A549 (cell line): ENCODE measurements at regions of chr9 and their contacts with region 1.

Region 1: DNA sequence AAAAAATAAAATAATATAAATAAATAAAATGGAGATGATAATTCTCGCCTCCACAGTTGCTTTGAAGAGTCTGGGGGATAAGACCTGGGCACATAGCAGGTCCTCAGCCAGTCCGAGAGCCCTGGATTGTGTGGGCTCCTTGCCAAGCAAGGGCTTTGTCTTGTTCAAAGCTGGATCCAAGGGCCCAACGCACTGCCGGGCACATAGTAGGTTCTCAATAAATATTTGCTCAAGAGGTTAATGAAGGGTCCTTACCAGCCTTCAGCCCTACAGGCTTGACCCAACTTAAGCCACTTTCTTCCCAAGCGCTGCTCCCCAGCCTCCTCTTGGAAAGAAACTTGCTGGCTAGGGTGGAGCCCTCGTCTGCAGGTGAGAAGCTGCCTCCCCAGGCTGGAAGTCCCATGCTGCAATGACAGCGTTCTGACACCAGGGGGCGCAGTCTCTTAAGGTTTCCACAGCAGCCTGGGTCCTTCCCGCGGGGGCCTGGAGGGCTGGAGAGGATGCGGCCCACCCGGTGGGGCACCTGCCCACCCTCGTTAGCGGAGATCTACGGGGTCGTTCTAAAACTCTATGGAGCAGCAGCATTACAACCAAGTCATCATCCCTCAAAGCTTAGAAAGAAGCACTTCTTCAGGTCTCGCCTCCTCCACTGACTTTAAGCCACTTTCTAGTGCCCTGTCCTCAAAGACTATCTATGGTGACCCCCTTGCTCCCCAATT is 115.2 kb downstream of the LHX2 start:
- DNase-seq: peak; percentile 71 to 75
- ATAC-seq: peak; percentile 62 to 82; a peak in 5 of 6 replicates
- H3K4me3 ChIP-seq: no peak overlapping the region
- H3K27ac ChIP-seq: peak overlapping the region in 1 of 2 experiments; percentile 47; a peak in 2 of 6 replicates
- H3K4me1 ChIP-seq: peaks cover 14% of the 10 kb centered on the region; the same call in 2 of the 3 replicates
- CTCF ChIP-seq: peak; percentile 91
- EP300 ChIP-seq: no peak
- POLR2A ChIP-seq: no peak
- RAD21 ChIP-seq: peak; percentile 93 to 95

Region 2: DNA sequence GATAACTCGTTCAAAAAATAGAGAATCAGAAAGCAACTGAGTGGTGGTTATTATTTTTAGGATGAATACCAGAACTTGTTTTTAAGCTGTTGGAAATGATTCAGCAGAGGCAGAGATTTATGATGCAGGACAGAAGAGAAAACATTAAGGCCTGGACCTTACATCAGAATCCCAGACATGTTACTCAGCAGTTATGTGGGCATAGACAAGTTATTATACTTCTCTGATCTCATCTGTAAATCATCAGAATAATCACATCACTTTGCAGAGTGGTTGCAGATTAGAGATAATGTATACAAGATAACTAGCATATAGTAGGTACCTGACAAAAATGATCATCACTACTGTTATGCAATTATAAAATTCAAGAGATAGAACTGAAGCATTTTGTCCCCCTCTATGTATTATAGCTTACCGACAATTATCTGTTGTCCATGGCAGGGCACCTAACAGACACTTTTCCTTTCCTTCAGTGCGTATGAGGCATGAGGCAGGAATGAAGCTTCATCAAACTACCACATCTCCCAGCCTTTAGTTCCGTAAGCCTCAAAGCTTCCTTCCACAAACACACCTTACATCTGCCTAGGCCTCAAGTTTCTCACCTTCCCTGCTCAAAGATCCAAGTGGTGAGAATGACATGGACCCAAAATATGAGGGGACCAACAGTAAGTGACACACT is 362.7 kb before region 1 on chr9:
- CTCF ChIA-PET with region 1: no interaction called
- POLR2A ChIA-PET with region 1: no interaction called
- DNase-seq: peak in 1 of 2 experiments; percentile 5
- ATAC-seq: no peak
- H3K4me3 ChIP-seq: no peak overlapping the region
- H3K27ac ChIP-seq: no peak overlapping the region
- H3K4me1 ChIP-seq: peaks cover 6% of the 10 kb centered on the region; the same call in 2 of the 3 replicates
- CTCF ChIP-seq: no peak
- EP300 ChIP-seq: no peak
- POLR2A ChIP-seq: no peak
- RAD21 ChIP-seq: no peak

Region 3: GRCh38 chr9:124149992-124150391 is 23.3 kb after region 1 on chr9:
- CTCF ChIA-PET with region 1: interaction called, 17 read pairs
- POLR2A ChIA-PET with region 1: no interaction called
- DNase-seq: no peak
- ATAC-seq: peak; percentile 69 to 74; a peak in 5 of 6 replicates
- H3K4me3 ChIP-seq: no peak overlapping the region
- H3K27ac ChIP-seq: no peak overlapping the region
- H3K4me1 ChIP-seq: peaks cover 10% of the 10 kb centered on the region; the same call in 2 of the 3 replicates
- CTCF ChIP-seq: no peak
- EP300 ChIP-seq: no peak
- POLR2A ChIP-seq: no peak
- RAD21 ChIP-seq: no peak

Region 4: DNA sequence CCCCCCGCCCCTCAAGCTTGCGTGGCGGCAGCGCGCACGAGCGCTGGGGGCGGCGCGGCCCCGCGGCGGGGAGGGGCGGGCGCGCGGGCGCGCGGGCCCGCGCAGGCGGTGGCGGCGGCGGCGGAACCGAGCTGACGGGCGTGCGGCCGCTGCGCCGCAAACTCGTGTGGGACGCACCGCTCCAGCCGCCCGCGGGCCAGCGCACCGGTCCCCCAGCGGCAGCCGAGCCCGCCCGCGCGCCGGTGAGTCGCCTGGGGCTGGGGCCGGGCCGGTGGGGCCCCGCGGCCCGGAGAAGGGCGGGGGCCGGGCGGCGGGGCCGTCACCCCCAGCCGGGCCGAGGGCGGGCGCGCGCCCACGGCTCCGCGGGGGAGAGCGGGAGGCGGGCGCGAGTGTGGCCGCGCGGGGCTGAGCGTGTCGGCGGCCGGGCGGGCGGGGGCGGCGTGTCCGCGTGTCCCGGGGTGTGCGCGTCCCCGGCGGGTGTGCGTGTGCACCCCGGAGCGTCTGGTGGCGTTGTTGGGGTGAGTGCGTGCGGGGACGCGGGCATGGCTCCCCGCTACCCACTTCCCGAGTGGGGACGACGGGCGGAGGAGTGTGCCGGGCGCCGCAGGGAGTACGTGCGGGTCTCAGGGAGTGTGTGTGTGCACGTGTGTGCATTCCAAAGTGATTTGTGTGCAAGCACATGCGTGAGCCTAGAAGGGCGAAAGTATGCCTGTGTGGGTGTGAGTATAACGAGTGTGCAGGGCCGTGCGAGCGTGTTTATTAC is 131.3 kb after region 1 on chr9 and contains the start of gene NEK6:
- CTCF ChIA-PET with region 1: interaction called, 11 read pairs
- POLR2A ChIA-PET with region 1: no interaction called
- DNase-seq: no peak
- ATAC-seq: peak; percentile 10 to 27; a peak in 5 of 6 replicates
- H3K4me3 ChIP-seq: peak within 1 kb of the TSS; percentile 79
- H3K27ac ChIP-seq: peak within 1 kb of the TSS; percentile 84 to 100
- H3K4me1 ChIP-seq: peaks cover 48% of the 10 kb centered on the region
- CTCF ChIP-seq: no peak
- EP300 ChIP-seq: no peak
- POLR2A ChIP-seq: peak; percentile 35
- RAD21 ChIP-seq: no peak
- polyA plus RNA-seq, gene NEK6: 33.7 and 38.7 TPM in 2 replicates

Region 5: DNA sequence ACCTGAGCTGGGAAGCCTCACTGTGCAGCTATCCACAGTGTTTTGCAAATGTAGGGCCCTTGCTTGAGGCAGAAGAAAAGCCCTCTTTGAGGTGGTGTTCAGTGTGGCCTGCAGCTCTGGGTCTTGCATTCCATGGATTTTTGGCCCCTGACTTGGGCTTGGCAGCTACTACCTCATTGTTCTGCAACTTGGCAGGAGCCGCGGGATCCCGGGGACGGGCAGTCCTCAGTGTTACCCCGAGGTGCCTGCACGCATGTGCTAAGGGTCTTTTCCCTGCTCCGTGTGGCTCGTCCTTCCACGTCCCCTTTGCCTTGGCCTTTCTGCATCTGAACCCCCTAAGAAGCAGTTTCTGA is 170.8 kb after region 1 on chr9:
- CTCF ChIA-PET with region 1: interaction called, 21 read pairs
- POLR2A ChIA-PET with region 1: no interaction called
- DNase-seq: peak; percentile 70 to 72
- ATAC-seq: peak; percentile 41 to 75; a peak in 5 of 6 replicates
- H3K4me3 ChIP-seq: no peak overlapping the region
- H3K27ac ChIP-seq: peak overlapping the region; percentile 79 to 89
- H3K4me1 ChIP-seq: peaks cover 87% of the 10 kb centered on the region
- CTCF ChIP-seq: no peak
- EP300 ChIP-seq: peak in 1 of 2 experiments; percentile 54; a peak in 1 of 5 replicates
- POLR2A ChIP-seq: no peak
- RAD21 ChIP-seq: peak; percentile 6 to 13; a peak in 1 of 5 replicates

Region 6: DNA sequence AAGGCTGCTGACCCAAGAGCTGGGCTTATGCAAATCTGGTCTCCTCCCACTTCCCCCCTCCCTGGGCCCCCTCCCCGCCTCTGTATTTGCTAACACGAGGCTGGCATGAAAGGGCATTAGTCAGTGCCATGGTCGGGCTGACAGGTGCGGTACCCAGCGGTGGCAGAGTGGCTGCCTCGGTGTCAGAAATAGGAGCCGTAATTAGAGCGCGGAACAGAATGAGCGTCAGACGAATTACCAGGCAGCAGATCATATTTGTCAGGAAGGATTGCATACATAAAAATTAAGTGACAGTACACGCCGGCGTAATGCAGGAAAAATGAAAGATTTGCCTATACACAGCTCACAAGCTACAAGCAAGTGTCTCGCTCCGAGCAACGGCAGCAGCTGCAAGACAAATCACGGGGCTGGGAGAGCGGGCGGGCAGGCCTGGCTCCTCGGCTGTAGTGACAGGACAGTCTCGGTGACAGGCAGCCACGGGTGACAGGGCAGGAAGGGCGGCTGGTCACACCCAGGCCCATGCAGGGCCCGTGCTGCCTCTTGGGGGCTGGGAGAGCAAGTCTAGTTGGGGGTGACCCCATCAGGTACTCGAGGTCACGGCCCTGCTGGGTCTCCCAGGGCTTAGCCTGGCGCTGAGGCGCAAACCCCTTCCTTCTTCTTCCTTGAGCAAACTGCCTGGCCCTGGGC is 203.4 kb after region 1 on chr9:
- CTCF ChIA-PET with region 1: interaction called, 23 read pairs
- POLR2A ChIA-PET with region 1: no interaction called
- DNase-seq: no peak
- ATAC-seq: no peak
- H3K4me3 ChIP-seq: no peak overlapping the region
- H3K27ac ChIP-seq: no peak overlapping the region
- H3K4me1 ChIP-seq: no peaks in the 10 kb centered on the region
- CTCF ChIP-seq: no peak
- EP300 ChIP-seq: no peak
- POLR2A ChIP-seq: no peak
- RAD21 ChIP-seq: no peak